ENCODE measurements at regions of chr20 and their contacts with region 1.

Region 1: DNA sequence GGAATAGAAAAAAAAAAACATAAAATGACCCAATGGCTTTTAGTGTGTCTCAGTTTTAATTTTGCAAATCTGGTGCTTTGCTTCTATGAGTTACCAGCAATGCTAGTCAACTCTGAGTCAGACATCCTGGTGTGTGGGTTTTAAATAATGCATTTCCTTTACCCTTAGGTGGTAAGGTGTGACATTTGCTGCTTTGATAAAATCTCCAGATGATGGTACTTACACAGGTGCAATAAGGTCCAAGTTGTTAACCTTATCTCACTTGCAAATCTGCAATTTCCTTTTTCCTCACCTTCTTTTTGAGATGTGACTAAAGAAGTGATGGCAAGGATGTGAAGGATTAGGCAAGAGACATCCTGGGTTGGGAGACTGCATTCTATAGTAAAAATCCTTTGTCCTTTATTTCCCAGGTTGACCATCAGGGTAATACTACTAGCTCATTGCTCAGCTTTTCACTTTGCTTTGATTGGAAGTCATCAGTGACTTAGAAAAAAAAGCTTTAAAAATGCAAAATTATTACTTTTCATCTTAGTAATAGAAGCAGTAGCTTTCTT is 818.5 kb upstream of the FLRT3 start:
- DNase-seq: no peak
- H3K4me3 Mint-ChIP-seq: no peak overlapping the region
- H3K27ac Mint-ChIP-seq: no peak overlapping the region
- H3K4me1 Mint-ChIP-seq: no peaks in the 10 kb centered on the region
- H3K27me3 Mint-ChIP-seq: no peaks in the 10 kb centered on the region

Region 2: DNA sequence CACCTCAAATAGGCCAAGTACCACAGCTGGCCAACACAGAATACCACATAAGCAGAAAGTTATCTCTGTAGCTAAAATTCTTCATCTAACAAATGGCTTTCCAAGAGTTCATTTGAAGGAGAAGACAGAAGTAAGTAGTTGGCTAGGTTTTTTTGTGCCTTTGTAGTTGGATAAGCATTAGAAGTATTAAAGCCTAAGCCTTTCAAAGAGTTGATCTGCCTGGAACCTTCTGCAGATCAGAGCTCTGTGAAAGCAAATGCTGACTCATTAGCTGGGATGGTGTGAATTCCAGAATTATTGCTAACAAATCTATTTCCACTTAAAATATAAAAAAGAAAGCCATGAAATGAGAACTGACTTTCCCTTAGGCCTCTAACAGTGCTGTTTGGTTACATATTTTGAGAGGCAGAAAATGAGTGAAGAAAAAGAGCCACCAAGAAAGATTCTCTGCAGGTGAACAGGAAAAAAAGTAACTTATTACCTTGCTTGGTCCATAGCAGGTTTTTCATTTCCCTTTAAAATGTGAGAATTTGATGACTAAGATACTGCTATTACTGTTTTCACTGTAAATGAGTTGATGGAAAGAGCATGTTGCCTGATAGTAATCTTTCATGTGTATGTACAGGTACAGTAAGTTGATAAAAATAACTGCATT is 55.3 kb before region 1 on chr20:
- CTCF ChIA-PET with region 1: no interaction called
- intact Hi-C with region 1: no loop called
- DNase-seq: no peak
- H3K4me3 Mint-ChIP-seq: no peak overlapping the region
- H3K27ac Mint-ChIP-seq: no peak overlapping the region
- H3K4me1 Mint-ChIP-seq: no peaks in the 10 kb centered on the region
- H3K27me3 Mint-ChIP-seq: no peaks in the 10 kb centered on the region

Region 3: DNA sequence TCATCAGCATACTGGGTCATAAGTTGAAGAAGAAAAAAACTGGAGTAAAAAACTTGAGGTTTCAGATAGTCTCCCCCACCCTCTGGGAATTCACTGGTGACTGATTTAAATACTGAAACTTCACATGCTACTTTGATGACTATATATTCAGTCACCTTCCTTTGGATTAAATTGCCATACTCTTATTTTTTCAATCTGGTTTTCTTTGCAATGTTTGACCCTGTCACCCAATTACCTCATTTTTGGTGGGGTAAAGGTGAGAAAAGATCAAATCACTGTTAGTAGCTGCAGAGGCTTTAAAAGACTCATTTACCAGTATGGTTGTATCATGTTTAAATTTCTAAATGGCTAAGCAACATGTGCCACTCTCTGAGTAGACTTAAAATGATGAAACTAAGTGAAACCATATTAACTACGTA is 44.2 kb after region 1 on chr20:
- CTCF ChIA-PET with region 1: no interaction called
- intact Hi-C with region 1: loop called (anchors 2 kb)
- DNase-seq: no peak
- H3K4me3 Mint-ChIP-seq: no peak overlapping the region
- H3K27ac Mint-ChIP-seq: no peak overlapping the region
- H3K4me1 Mint-ChIP-seq: peaks cover 2% of the 10 kb centered on the region
- H3K27me3 Mint-ChIP-seq: no peaks in the 10 kb centered on the region

Measured in activated naive CD4-positive, alpha-beta T cell treated with anti-CD3 and anti-CD28 coated beads for 36 hours (primary cell).